ENCODE measurements at regions of chr7 and their contacts with region 1.

Region 1: GRCh38 chr7:7968543-7969305 is at the start of gene GLCCI1:
- DNase-seq: peak; percentile 98
- H3K4me3 ChIP-seq: peak within 1 kb of the TSS; percentile 72
- H3K27ac ChIP-seq: peak within 1 kb of the TSS; percentile 92
- H3K4me1 ChIP-seq: peaks cover 50% of the 10 kb centered on the region
- CTCF ChIP-seq: no peak
- total RNA-seq, gene GLCCI1: 18.5 and 21.3 TPM in 2 replicates

Region 2: GRCh38 chr7:7566651-7567611 is 401.8 kb before region 1 on chr7 and contains the start of gene MIOS:
- CTCF ChIA-PET with region 1: no interaction called
- POLR2A ChIA-PET with region 1: interaction called, 3 read pairs
- intact Hi-C with region 1: loop called (anchors 5 kb)
- DNase-seq: peak; percentile 83
- H3K4me3 ChIP-seq: peak within 1 kb of the TSS; percentile 79
- H3K27ac ChIP-seq: peak within 1 kb of the TSS; percentile 63
- H3K4me1 ChIP-seq: peaks cover 32% of the 10 kb centered on the region
- CTCF ChIP-seq: no peak
- total RNA-seq, gene MIOS: 18.9 and 24.9 TPM in 2 replicates

Region 3: GRCh38 chr7:7772397-7772821 is 196.3 kb before region 1 on chr7:
- CTCF ChIA-PET with region 1: no interaction called
- POLR2A ChIA-PET with region 1: interaction called, 15 read pairs
- intact Hi-C with region 1: loop called (anchors 5 kb)
- DNase-seq: peak; percentile 50
- H3K4me3 ChIP-seq: peak overlapping the region; percentile 56
- H3K27ac ChIP-seq: peak overlapping the region; percentile 35
- H3K4me1 ChIP-seq: peaks cover 29% of the 10 kb centered on the region
- CTCF ChIP-seq: no peak

Region 4: DNA sequence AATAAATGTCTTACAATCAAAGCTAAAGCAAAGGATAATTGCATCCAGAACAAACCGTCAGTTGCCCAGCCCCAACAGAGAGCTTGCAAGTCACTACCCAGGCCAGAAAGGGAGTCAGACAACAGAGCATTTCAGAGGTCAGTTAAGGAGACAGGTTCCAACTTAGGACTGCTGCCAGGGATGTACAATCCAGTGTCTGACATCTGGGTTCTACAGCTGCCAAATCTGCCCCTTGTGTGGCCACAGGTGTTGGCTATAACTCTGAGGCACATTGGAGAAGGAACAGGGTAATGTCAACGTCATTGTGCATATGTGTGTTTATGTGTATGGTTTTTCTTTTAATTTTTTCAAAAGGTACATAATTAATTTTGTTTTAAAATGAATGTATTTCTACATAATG is 85.3 kb before region 1 on chr7:
- CTCF ChIA-PET with region 1: no interaction called
- POLR2A ChIA-PET with region 1: no interaction called
- intact Hi-C with region 1: no loop called
- DNase-seq: no peak
- H3K4me3 ChIP-seq: no peak overlapping the region
- H3K27ac ChIP-seq: no peak overlapping the region
- H3K4me1 ChIP-seq: peaks cover 6% of the 10 kb centered on the region
- CTCF ChIP-seq: no peak

Region 5: DNA sequence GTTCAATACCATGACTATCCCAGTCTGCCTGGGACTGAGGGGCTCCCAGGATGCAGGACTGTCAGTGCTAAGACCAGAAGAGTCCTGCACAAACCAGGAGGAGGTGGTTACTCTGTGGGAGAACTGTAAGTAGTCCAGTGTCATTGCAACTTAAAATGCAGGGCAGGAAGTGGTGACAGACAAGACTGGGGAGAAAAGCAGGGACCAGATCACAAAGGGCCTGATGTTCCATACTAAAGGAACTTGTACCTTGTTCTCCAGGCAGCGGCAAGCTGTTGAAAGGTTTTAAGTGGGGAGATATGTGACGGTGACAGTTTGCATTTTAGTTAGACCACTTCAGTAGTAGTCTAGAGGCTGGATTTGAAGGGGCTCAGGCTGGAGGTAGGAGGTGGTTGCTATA is 65.9 kb before region 1 on chr7:
- CTCF ChIA-PET with region 1: no interaction called
- POLR2A ChIA-PET with region 1: no interaction called
- intact Hi-C with region 1: no loop called
- DNase-seq: no peak
- H3K4me3 ChIP-seq: no peak overlapping the region
- H3K27ac ChIP-seq: no peak overlapping the region
- H3K4me1 ChIP-seq: no peaks in the 10 kb centered on the region
- CTCF ChIP-seq: no peak

Region 6: GRCh38 chr7:7944619-7945282 is 24.0 kb before region 1 on chr7:
- CTCF ChIA-PET with region 1: interaction called, 5 read pairs
- POLR2A ChIA-PET with region 1: interaction called, 85 read pairs
- intact Hi-C with region 1: loop called (anchors 1 kb)
- DNase-seq: peak; percentile 91
- H3K4me3 ChIP-seq: peak overlapping the region; percentile 56
- H3K27ac ChIP-seq: peak overlapping the region; percentile 91
- H3K4me1 ChIP-seq: peaks cover 37% of the 10 kb centered on the region
- CTCF ChIP-seq: no peak

Region 7: GRCh38 chr7:8176370-8177081 is 207.8 kb after region 1 on chr7:
- CTCF ChIA-PET with region 1: no interaction called
- POLR2A ChIA-PET with region 1: interaction called, 3 read pairs
- intact Hi-C with region 1: loop called (anchors 2 kb)
- DNase-seq: peak; percentile 84
- H3K4me3 ChIP-seq: peak overlapping the region; percentile 54
- H3K27ac ChIP-seq: peak overlapping the region; percentile 61
- H3K4me1 ChIP-seq: peaks cover 32% of the 10 kb centered on the region
- CTCF ChIP-seq: no peak

Region 8: DNA sequence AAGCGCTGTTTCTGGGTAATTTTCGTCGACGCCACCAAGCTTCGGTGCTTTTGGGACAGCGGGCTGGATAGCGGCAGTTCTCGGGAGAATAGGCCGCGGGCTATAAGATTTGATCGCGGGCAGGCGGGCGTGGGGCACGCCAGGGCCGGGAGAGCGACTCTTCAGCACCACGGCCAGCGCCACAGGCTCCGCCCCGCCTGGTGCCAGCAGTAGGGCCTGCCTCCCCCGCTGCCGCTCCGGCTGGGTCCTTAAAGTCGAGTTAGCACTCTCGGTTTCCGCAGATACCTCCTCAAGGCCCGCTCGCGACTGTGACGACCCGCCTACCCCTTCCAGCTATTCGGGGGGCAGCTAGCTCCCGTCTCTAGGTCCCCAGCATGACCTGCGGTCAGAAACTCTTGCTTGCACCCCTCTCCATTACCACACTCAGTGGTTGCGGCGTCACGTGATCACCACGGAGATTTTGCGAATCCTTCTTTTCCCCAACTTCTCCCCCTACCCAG is 474.1 kb after region 1 on chr7:
- CTCF ChIA-PET with region 1: no interaction called
- POLR2A ChIA-PET with region 1: no interaction called
- intact Hi-C with region 1: no loop called
- DNase-seq: no peak
- H3K4me3 ChIP-seq: no peak overlapping the region
- H3K27ac ChIP-seq: no peak overlapping the region
- H3K4me1 ChIP-seq: no peaks in the 10 kb centered on the region
- CTCF ChIP-seq: no peak

Measured in OCI-LY7 (cell line).